ENCODE measurements at regions of chr17 and their contacts with region 1.

Region 1: DNA sequence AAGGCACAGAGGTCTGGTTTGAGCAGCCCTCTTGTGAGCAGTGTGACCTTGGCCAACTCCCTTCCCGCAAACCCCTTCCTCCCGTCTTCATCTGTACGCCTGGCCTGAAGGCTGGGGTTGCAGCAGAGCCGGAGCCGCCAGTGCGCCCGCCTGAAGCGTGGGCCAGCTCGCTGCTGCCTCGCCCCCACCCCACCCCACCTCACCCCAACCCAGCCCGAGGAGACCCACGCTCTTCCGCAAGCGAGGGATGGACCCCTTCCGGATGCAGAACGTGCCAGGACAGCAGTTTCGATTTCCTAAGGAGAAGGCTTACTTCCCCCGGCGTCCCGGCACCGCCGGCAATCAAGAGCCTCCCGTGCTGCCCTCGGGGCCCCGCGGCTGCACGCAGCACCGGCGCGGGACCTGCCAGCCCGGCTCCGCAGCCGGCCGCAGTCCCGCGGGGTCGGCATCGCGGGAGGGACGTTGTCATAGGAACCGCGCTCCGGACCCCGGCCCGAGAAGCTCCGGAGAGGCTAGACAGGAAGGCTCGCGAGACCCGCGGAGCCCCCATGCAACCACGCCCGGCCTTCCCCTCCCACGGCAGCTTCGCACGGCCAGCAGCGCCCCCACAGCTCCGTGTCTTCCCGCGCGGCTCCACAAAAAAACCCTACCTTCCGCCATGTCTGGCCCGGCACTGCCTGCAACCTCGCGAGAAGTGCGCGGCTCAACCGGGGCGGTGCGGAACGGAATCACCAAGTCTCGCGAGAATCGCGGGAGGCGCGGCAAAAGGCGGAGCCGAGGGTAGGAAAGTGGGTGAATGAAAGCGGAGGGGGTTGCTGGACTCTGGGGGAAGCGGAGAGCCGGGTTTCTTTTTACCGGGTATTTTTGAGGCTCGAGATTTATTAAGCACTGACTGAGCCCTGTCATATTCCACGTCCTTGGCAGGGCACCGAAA is at the start of gene ANKFY1:
- DNase-seq: peak; percentile 99
- H3K4me3 Mint-ChIP-seq: peak within 1 kb of the TSS; percentile 89
- H3K27ac Mint-ChIP-seq: peak within 1 kb of the TSS; percentile 83
- H3K4me1 Mint-ChIP-seq: peaks cover 34% of the 10 kb centered on the region
- H3K27me3 Mint-ChIP-seq: no peaks in the 10 kb centered on the region
- total RNA-seq, gene ANKFY1: 36.6 to 37.4 TPM

Region 2: DNA sequence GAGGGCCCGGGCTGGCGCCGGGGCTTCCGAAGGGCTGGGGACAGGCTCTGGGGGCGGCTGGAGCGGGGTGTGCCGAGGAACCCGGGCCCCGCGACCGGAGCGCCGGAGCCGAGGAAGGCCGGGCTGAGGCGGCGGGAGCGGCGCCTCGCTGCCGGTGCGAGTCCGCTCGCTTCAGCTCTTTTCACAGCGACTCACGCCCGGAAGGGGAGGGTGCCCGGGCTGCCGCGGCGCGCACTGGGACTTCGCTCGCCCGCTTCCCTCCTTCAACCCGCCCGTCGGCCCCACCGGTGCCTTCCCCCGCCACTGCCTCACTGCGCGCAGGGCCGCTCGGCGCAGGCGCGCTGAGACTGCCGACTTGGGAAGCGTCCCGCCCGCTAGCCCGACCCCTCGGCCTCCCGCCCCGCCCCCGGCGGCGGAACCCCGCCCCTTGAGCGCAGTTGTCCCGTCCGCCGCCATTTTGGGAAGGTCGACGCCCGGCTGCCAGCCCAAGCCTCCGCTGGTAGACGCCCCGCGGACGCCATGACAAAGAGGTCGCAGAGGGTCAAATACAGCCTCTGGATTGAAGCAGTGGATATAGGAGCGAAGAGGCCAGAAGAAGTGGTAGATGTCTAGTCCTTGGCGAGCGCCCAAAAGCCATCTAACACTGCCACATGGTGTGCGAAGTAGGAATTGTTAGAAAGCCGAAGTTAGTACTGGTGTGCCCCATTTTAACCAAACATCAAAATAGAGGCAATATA is 102.9 kb after region 1 on chr17 and contains the start of gene UBE2G1:
- CTCF ChIA-PET with region 1: no interaction called
- intact Hi-C with region 1: loop called (anchors 1 kb)
- DNase-seq: peak; percentile 99
- H3K4me3 Mint-ChIP-seq: peak within 1 kb of the TSS; percentile 71
- H3K27ac Mint-ChIP-seq: peak within 1 kb of the TSS; percentile 81
- H3K4me1 Mint-ChIP-seq: peaks cover 31% of the 10 kb centered on the region
- H3K27me3 Mint-ChIP-seq: no peaks in the 10 kb centered on the region
- total RNA-seq, gene UBE2G1: 33.3 to 36.1 TPM

Measured in activated naive CD4-positive, alpha-beta T cell treated with anti-CD3 and anti-CD28 coated beads for 36 hours (primary cell).